Vagina (tissue), 2 donors: ENCODE measurements at regions of chr3 and their contacts with region 1.

Region 1: DNA sequence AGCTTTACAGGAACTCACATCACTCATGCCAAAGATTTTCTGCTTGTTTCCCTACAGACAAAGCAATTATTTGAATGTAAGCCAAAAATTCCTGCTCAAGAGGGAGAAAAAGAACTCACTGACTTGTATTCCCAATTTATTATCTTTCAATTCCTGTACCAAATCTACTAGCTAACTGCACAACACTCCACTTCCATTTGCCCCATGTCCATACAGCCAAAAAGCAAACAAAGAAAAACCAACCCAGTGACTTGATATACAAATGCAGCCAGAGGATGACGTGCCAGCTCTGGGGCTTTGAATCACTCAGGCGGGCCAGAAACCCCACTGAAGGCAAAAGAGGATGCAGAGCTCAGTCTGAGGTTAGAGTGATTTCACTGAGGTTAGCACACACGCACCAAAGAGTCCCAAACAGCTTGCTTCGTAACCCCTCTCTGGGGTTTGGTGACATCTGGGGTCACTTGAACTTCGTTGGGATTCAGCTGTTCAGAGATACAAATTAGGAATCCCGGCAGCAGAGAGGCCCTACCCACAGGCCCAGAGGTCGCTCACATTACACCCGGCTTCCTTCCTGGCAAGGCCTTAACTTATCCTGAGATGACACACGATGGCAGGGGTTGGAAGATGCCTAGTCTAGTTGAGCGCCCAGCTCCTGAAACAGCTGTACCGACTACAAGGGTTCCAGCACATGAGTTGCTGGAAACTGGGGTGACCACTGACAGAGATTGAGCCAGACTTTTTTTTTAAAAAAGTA is 1.6 kb downstream of the RFTN1 start:
- DNase-seq: no peak
- H3K4me3 ChIP-seq: peak overlapping the region; percentile 77 to 88
- H3K27ac ChIP-seq: peak overlapping the region; percentile 77
- H3K4me1 ChIP-seq: peaks cover 36% of the 10 kb centered on the region
- H3K27me3 ChIP-seq: no peaks in the 10 kb centered on the region
- CTCF ChIP-seq: no peak
- POLR2A ChIP-seq: no peak

Region 2: GRCh38 chr3:16311960-16312451 is 199.9 kb before region 1 on chr3:
- intact Hi-C with region 1: loop called (anchors 10 kb)
- DNase-seq: no peak
- H3K4me3 ChIP-seq: no peak overlapping the region
- H3K27ac ChIP-seq: no peak overlapping the region
- H3K4me1 ChIP-seq: peaks cover 5% of the 10 kb centered on the region
- H3K27me3 ChIP-seq: no peaks in the 10 kb centered on the region
- CTCF ChIP-seq: no peak
- POLR2A ChIP-seq: no peak

Region 3: GRCh38 chr3:16399473-16399872 is 112.4 kb before region 1 on chr3:
- intact Hi-C with region 1: loop called (anchors 10 kb)
- DNase-seq: no peak
- H3K4me3 ChIP-seq: no peak overlapping the region
- H3K27ac ChIP-seq: peak overlapping the region; percentile 61
- H3K4me1 ChIP-seq: peaks cover 30% of the 10 kb centered on the region
- H3K27me3 ChIP-seq: no peaks in the 10 kb centered on the region
- CTCF ChIP-seq: no peak
- POLR2A ChIP-seq: no peak

Region 4: GRCh38 chr3:16448639-16449070 is 63.2 kb before region 1 on chr3:
- intact Hi-C with region 1: loop called (anchors 10 kb)
- DNase-seq: peak in 1 of 2 donors; percentile 77
- H3K4me3 ChIP-seq: no peak overlapping the region
- H3K27ac ChIP-seq: peak overlapping the region; percentile 38
- H3K4me1 ChIP-seq: peaks cover 14% of the 10 kb centered on the region
- H3K27me3 ChIP-seq: no peaks in the 10 kb centered on the region
- CTCF ChIP-seq: no peak
- POLR2A ChIP-seq: no peak

Region 5: GRCh38 chr3:16476641-16477455 is 35.0 kb before region 1 on chr3:
- intact Hi-C with region 1: no loop called
- DNase-seq: no peak
- H3K4me3 ChIP-seq: no peak overlapping the region
- H3K27ac ChIP-seq: no peak overlapping the region
- H3K4me1 ChIP-seq: peaks cover 14% of the 10 kb centered on the region
- H3K27me3 ChIP-seq: no peaks in the 10 kb centered on the region
- CTCF ChIP-seq: no peak
- POLR2A ChIP-seq: no peak

Region 6: DNA sequence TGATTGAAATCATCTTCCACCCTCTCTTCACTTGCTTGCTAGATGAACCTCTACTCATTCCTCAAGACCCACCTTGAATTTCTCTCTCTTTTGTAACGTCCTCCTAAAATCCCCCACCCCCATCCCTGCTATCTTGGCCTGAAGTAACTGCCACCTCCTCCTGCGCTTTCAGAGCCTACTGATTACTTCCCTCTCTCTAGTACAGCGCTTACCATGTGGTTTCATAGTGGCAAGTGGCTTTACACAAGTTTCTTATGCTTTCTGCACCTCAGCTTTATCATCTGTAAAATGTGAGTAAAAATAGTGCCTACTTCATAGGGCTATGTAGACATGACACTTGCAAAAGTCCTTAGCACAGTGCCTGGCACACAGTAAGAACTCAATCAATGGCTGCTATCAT is 122.1 kb after region 1 on chr3:
- intact Hi-C with region 1: no loop called
- DNase-seq: no peak
- H3K4me3 ChIP-seq: no peak overlapping the region
- H3K27ac ChIP-seq: no peak overlapping the region
- H3K4me1 ChIP-seq: no peaks in the 10 kb centered on the region
- H3K27me3 ChIP-seq: no peaks in the 10 kb centered on the region
- CTCF ChIP-seq: no peak
- POLR2A ChIP-seq: no peak

Region 7: DNA sequence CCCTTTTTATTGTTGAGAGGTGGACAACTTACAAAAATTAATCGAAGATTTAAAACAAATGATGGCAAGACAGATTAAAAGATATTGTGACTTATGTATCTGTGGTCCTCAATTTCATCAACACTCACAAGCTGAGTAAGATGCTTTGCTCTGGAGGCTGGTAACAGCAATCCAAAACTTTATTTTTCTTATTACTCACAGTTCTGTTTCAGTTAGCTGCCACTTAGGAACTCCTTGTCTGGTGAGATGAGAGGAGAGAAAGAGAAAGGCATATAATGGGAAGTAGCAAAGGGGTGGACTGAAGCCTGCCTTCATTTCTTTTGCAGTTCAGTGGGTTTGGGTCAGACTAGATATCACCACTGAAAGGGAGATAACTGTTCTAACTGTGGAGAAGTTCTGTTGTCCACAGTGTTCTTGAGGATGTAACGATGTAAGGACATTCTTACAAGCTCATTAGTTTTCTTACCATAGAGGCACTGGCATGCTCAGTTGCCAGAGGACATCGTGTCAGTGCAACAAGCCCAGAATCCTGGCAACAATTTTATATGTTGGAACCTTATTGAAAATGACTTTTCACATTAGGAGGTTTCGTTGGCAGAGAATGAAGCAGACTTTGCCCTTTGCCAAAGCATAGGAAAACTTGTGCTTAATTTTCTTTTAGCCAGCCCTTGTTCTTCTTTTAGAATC is 466.5 kb after region 1 on chr3:
- intact Hi-C with region 1: no loop called
- DNase-seq: no peak
- H3K4me3 ChIP-seq: no peak overlapping the region
- H3K27ac ChIP-seq: no peak overlapping the region
- H3K4me1 ChIP-seq: no peaks in the 10 kb centered on the region
- H3K27me3 ChIP-seq: no peaks in the 10 kb centered on the region
- CTCF ChIP-seq: no peak
- POLR2A ChIP-seq: no peak